ENCODE measurements at regions of chr13 and their contacts with region 1.

Region 1: DNA sequence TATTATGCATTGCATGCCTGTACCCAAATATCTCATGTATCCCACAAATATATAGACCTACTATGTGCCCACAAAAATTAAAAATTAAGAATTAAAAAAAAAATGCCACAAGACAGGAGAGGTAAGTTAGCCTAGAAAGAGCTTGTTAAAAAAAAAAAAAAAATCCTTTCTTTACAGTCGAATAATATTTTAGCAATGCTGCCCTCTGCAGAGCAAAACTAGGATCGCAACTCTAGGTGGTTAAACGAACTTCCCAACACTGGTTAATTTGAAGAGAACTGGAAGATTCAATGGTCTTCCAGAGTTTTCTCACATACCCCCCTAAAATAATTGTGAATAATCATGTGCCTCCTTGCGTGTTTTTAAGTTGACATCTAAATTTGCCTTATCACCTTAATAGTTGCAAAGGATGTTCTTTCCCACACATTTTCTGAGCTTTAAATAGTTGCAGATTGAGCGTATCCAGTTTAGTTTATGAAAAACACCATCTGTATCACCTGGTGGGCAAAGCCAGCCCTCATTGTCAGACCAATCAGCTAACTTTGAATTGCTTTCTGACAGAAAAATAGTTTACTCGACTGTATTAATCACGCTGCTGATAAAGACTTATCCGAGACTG is 47.4 kb upstream of the RCBTB2 start:
- DNase-seq: peak; percentile 72
- ATAC-seq: peak; percentile 37 to 56

Region 2: DNA sequence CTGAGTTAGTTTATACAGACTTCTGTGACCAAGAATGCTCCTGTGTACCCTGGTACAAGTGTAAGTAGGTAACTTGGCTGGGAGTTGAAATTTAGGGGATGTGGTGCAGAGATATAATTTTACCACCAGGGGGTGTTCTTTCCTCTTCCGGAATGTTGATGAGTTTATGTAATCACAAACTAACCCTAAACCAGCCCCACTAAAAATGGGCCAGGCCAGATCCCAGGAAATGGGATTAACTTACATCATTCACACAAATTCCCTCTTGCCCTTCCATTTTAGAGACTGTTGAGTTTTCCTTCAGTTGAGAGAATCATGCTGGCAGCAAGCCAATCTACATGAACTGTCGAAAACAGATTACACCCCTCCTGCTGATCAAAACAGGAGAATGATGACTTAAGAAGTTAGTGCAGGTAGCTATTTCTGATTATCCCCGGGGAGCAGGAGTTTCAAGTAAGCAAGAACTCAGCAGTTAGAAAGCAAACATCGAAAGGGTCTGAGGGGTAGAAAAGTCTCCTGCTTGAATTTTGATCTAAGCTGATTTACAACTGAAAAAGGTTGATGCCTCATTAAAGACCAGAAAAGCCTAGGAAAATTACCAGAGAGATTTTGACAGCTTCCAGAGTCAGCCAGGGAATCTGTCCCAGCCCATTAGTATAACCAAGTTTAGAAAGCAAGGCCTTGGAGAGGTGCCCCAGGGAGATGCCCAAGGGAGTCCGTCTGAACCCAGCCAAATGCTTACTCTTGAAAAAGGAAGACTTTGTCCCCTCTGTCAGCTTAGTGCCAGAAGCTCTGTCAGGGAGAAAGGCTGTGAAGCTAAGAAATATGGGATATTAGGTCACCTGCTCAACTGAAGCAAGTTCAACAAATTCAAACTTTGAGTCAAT is 453.1 kb before region 1 on chr13:
- intact Hi-C with region 1: loop called in 1 of 2 experiments (anchors 10 kb)
- DNase-seq: peak; percentile 58
- ATAC-seq: peak; percentile 85 to 86

Region 3: GRCh38 chr13:48334534-48335127 is 245.7 kb before region 1 on chr13:
- intact Hi-C with region 1: loop called (anchors 2 to 5 kb)
- DNase-seq: no peak
- ATAC-seq: peak; percentile 58 to 63

Region 4: GRCh38 chr13:48412881-48413351 is 167.4 kb before region 1 on chr13 and contains the start of gene LPAR6:
- intact Hi-C with region 1: loop called in 1 of 2 experiments (anchors 5 kb)
- DNase-seq: no peak
- ATAC-seq: peak; percentile 86 to 89
- total RNA-seq, gene LPAR6: 13.5 to 15.0 TPM

Measured in left cardiac atrium (tissue), 4 donors.